Activated CD8-positive, alpha-beta T cell treated with anti-CD3 and anti-CD28 coated beads, Interleukin-2, amount 10 ng/mL, durations not matched to agents 7 days and 5 days (primary cell): ENCODE measurements at regions of chr12 and their contacts with region 1.

Region 1: GRCh38 chr12:54993161-54993835 is 8.7 kb upstream of the TESPA1 start:
- DNase-seq: peak; percentile 77
- ATAC-seq: peak; percentile 66
- H3K4me3 Mint-ChIP-seq: no peak overlapping the region
- H3K27ac Mint-ChIP-seq: no peak overlapping the region
- H3K4me1 Mint-ChIP-seq: peaks cover 36% of the 10 kb centered on the region
- H3K27me3 Mint-ChIP-seq: no peaks in the 10 kb centered on the region

Region 2: GRCh38 chr12:54723379-54724256 is 269.7 kb before region 1 on chr12:
- CTCF ChIA-PET with region 1: interaction called, 10 read pairs
- POLR2A ChIA-PET with region 1: no interaction called
- DNase-seq: peak; percentile 58
- ATAC-seq: peak; percentile 57
- H3K4me3 Mint-ChIP-seq: no peak overlapping the region
- H3K27ac Mint-ChIP-seq: no peak overlapping the region
- H3K4me1 Mint-ChIP-seq: peaks cover 10% of the 10 kb centered on the region
- H3K27me3 Mint-ChIP-seq: peaks cover 20% of the 10 kb centered on the region

Region 3: DNA sequence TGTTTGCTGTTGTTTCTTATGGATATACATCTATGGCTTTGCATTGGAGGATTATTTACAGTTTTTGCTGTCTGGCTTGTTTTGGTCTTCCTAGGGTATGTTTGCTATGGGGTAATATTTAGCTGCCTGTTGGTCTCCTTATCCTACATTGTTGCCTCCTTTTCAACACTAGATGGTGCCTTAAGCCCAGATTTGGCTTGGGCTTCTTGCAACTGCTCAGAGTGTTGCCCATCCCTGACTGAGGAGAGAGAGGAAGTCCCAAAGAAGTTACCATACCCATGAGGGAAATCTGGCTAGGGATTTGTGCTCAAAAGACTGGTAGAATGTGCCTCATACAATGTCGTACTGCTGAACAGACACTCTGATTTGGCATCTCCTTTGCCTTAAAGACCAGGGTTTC is 233.5 kb before region 1 on chr12:
- CTCF ChIA-PET with region 1: interaction called, 16 read pairs
- POLR2A ChIA-PET with region 1: no interaction called
- DNase-seq: peak; percentile 33
- ATAC-seq: no peak
- H3K4me3 Mint-ChIP-seq: no peak overlapping the region
- H3K27ac Mint-ChIP-seq: no peak overlapping the region
- H3K4me1 Mint-ChIP-seq: peaks cover 12% of the 10 kb centered on the region
- H3K27me3 Mint-ChIP-seq: no peaks in the 10 kb centered on the region

Region 4: DNA sequence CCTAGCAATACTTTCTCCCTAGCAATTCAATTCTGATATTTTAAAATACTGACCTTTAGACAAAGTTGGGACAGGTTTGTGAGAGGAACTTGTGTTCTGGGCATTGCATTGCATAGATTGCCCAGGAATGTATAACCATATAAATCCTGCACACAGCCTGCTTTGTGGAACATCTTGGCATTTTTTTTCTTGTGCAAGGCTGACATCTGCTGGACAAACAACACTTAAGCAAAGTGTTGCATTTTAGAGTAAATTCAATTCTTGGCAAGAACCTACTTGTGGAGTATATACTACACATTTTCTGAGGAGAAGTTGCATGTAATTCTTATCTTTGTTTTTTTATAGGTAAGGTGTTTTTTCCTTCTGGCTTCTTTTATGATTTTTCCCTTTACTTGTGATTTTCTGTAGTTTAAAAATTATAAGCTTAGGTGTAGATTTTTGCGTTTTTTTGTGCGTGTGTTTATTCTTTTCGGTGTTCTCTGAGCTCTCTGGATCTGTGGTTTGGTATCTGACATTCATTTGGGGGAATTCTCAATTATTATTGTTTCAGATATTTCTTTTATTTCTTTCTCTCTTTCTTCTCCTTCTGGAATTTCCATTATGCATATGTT is 35.1 kb before region 1 on chr12:
- CTCF ChIA-PET with region 1: interaction called, 26 read pairs
- POLR2A ChIA-PET with region 1: interaction called, 4 read pairs
- DNase-seq: peak; percentile 65
- ATAC-seq: peak; percentile 43
- H3K4me3 Mint-ChIP-seq: no peak overlapping the region
- H3K27ac Mint-ChIP-seq: no peak overlapping the region
- H3K4me1 Mint-ChIP-seq: peaks cover 67% of the 10 kb centered on the region
- H3K27me3 Mint-ChIP-seq: no peaks in the 10 kb centered on the region

Region 5: GRCh38 chr12:54977155-54977554 is 16.1 kb before region 1 on chr12:
- CTCF ChIA-PET with region 1: interaction called, 49 read pairs
- POLR2A ChIA-PET with region 1: interaction called, 3 read pairs
- DNase-seq: no peak
- ATAC-seq: no peak
- H3K4me3 Mint-ChIP-seq: peak overlapping the region; percentile 70
- H3K27ac Mint-ChIP-seq: peak overlapping the region; percentile 79
- H3K4me1 Mint-ChIP-seq: peaks cover 84% of the 10 kb centered on the region
- H3K27me3 Mint-ChIP-seq: no peaks in the 10 kb centered on the region